Left cardiac atrium (tissue), 4 donors: ENCODE measurements at regions of chr2 and their contacts with region 1.

Region 1: GRCh38 chr2:212520340-212520739 is 18.3 kb downstream of the ERBB4 start:
- DNase-seq: no peak
- ATAC-seq: peak in 1 of 2 donors; percentile 57

Region 2: GRCh38 chr2:212013626-212014025 is 506.7 kb before region 1 on chr2:
- intact Hi-C with region 1: loop called in 1 of 2 experiments (anchors 10 kb)
- DNase-seq: no peak
- ATAC-seq: no peak

Region 3: DNA sequence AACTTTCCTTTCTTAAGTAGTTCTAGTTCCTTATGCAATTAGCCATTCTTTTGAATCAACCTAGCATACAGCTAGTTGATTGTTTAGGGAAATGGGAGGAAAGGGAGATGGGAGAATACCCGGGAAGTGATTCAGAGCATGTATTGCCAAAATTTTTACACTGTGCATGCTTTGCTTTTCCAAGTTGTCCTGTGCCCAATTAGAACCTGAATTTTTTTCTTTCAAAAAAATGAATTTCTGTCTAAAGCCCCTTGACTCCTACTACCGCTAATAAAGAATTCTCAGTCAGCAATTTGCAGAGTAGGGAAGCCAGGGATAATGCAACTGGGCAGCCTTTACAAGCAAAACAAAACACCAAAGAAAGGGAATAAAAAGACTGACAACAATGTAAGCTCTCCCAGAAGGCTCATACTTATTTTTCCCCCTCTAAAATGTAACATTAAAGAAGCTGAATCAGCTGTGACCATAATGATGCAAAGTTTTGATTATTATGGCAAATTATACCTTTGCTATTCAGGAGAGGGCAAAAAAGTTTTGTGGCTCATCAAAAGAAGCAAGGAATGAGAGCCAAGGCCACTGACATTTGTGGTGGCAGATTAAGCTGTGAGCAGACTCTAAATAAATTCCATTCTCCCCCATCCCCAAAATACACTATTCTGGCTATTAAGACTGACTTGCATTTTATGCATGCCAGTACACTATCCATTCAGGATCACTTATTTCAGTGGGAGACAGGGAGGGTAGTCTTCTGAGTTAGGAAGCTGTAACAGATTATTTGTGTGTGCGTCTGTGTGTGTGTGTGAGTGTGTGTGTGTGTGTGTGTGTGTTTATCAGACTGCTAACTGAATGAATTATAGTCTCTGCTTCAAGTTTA is 156.0 kb before region 1 on chr2:
- intact Hi-C with region 1: loop called in 1 of 2 experiments (anchors 5 kb)
- DNase-seq: no peak
- ATAC-seq: peak; percentile 34 to 72